Activated CD8-positive, alpha-beta T cell treated with anti-CD3 and anti-CD28 coated beads, Interleukin-2, amount 10 ng/mL, durations not matched to agents 7 days and 5 days (primary cell): ENCODE measurements at regions of chr2 and their contacts with region 1.

Region 1: GRCh38 chr2:64644177-64645004 is 9.3 kb downstream of the SERTAD2 start:
- DNase-seq: peak; percentile 82
- ATAC-seq: peak; percentile 87
- H3K4me3 Mint-ChIP-seq: peak overlapping the region; percentile 83
- H3K27ac Mint-ChIP-seq: peak overlapping the region; percentile 93
- H3K4me1 Mint-ChIP-seq: peaks cover 91% of the 10 kb centered on the region
- H3K27me3 Mint-ChIP-seq: no peaks in the 10 kb centered on the region

Region 2: DNA sequence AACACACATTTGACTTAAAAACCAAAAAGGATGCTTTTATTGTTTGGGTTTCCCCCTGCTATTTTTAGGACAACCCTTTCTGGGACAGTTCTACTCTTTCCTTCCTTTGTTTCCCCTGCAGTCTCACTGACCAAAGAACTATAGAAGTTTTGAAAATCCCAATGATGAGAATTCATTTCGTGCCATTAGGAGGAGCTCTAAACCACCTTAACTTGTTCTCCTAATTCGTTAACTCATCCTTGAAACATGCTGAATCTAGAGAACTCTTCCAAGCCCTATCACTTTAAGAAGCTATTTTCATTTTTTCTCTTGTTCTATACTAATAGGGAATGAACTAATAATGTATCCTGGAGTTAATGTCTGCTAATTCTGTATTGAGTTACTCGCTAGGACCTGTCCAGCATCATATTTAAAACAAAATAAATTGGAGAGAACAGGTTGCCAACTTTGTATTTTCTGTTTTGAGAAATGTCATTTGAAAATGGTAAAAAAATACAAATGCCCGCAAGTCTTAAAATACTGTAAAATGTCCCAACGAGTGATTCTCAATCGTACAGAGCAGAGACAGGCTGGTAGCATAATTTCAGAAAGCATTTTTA is 57.4 kb before region 1 on chr2:
- CTCF ChIA-PET with region 1: interaction called, 36 read pairs
- POLR2A ChIA-PET with region 1: no interaction called
- DNase-seq: no peak
- ATAC-seq: no peak
- H3K4me3 Mint-ChIP-seq: no peak overlapping the region
- H3K27ac Mint-ChIP-seq: no peak overlapping the region
- H3K4me1 Mint-ChIP-seq: peaks cover 6% of the 10 kb centered on the region
- H3K27me3 Mint-ChIP-seq: no peaks in the 10 kb centered on the region

Region 3: GRCh38 chr2:64609227-64609941 is 35.0 kb before region 1 on chr2:
- CTCF ChIA-PET with region 1: interaction called, 33 read pairs
- POLR2A ChIA-PET with region 1: interaction called, 4 read pairs
- DNase-seq: peak; percentile 71
- ATAC-seq: peak; percentile 77
- H3K4me3 Mint-ChIP-seq: peak overlapping the region; percentile 61
- H3K27ac Mint-ChIP-seq: peak overlapping the region; percentile 67
- H3K4me1 Mint-ChIP-seq: peaks cover 25% of the 10 kb centered on the region
- H3K27me3 Mint-ChIP-seq: peaks cover 19% of the 10 kb centered on the region

Region 4: DNA sequence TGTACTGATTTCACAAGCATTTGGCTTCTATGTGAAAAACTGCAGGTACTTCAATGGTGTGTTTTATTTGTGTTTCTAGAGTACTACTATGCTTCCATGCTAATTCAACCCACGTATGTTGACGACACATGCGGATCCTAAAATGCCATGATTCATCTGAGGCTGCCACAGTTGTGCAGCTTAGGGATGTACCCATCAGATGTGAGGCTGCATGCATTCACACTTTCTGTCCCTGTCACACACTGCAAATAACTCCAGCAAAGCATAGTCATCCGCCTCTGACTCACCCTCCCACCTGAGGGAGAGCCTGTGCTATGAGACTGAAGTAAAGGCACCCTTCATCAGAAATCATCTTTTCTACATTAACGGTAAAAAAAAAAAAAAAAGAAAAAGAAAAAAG is 31.5 kb after region 1 on chr2:
- CTCF ChIA-PET with region 1: interaction called, 10 read pairs
- POLR2A ChIA-PET with region 1: no interaction called
- DNase-seq: peak; percentile 49
- ATAC-seq: peak; percentile 81
- H3K4me3 Mint-ChIP-seq: no peak overlapping the region
- H3K27ac Mint-ChIP-seq: no peak overlapping the region
- H3K4me1 Mint-ChIP-seq: peaks cover 47% of the 10 kb centered on the region
- H3K27me3 Mint-ChIP-seq: no peaks in the 10 kb centered on the region

Region 5: GRCh38 chr2:64730551-64731262 is 86.3 kb after region 1 on chr2:
- CTCF ChIA-PET with region 1: interaction called, 33 read pairs
- POLR2A ChIA-PET with region 1: interaction called, 77 read pairs
- DNase-seq: peak; percentile 60
- ATAC-seq: peak; percentile 72
- H3K4me3 Mint-ChIP-seq: peak overlapping the region; percentile 81
- H3K27ac Mint-ChIP-seq: peak overlapping the region; percentile 92
- H3K4me1 Mint-ChIP-seq: peaks cover 75% of the 10 kb centered on the region
- H3K27me3 Mint-ChIP-seq: no peaks in the 10 kb centered on the region

Region 6: DNA sequence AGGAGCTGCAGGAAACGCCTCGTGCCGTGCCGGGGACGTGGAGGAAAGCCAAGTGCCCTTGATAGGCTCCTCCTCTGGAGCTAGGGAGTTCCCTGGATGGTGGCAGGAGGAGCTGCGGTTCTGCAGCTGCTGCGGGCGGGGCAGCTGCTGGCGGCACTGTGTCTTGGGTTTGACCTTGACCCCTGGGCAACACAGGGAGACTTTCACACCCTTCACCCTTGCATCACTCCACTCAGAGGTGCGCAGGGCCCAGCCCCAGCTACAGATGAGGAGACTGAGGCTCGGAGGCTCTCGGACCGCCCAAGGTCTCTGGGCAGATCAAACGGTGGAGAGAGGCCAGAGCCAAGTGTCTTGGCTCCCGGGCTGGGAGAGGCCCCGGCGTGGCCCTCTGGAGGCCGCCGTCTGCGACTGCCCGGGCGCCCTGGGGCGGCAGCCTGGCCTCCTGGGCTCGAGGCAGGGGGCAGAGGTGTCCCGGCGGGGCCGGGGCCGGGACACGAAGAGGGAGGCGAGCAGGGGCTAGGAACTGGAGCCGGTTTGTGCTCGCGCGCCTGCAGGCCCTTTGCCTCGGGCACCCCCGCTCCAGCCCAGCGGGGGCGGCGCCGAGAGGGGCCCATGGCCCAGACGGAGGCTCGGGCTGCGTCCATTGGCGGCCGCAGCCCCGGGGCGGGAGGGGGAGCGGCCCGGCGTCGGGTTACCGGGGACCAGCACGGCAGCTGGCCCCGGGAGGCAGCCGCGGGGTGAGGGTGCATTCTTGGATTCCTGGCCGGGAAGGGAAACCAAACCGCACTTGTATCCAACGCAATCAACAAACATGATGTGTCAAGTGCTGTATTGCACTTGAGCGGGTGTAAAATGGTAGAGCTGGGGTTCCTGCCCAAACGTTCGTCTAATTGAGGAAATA is 215.2 kb after region 1 on chr2:
- CTCF ChIA-PET with region 1: interaction called, 34 read pairs
- POLR2A ChIA-PET with region 1: no interaction called
- DNase-seq: no peak
- ATAC-seq: no peak
- H3K4me3 Mint-ChIP-seq: no peak overlapping the region
- H3K27ac Mint-ChIP-seq: no peak overlapping the region
- H3K4me1 Mint-ChIP-seq: peaks cover 6% of the 10 kb centered on the region
- H3K27me3 Mint-ChIP-seq: no peaks in the 10 kb centered on the region

Region 7: GRCh38 chr2:64865073-64865830 is 220.9 kb after region 1 on chr2:
- CTCF ChIA-PET with region 1: interaction called, 45 read pairs
- POLR2A ChIA-PET with region 1: no interaction called
- DNase-seq: peak; percentile 69
- ATAC-seq: peak; percentile 94
- H3K4me3 Mint-ChIP-seq: peak overlapping the region; percentile 67
- H3K27ac Mint-ChIP-seq: no peak overlapping the region
- H3K4me1 Mint-ChIP-seq: no peaks in the 10 kb centered on the region
- H3K27me3 Mint-ChIP-seq: peaks cover 2% of the 10 kb centered on the region

Region 8: GRCh38 chr2:65083187-65083586 is 438.8 kb after region 1 on chr2:
- CTCF ChIA-PET with region 1: no interaction called
- POLR2A ChIA-PET with region 1: no interaction called
- DNase-seq: no peak
- ATAC-seq: no peak
- H3K4me3 Mint-ChIP-seq: no peak overlapping the region
- H3K27ac Mint-ChIP-seq: no peak overlapping the region
- H3K4me1 Mint-ChIP-seq: peaks cover 11% of the 10 kb centered on the region
- H3K27me3 Mint-ChIP-seq: no peaks in the 10 kb centered on the region